Esophagus muscularis mucosa (tissue), 4 donors: ENCODE measurements at regions of chrX and their contacts with region 1.

Region 1: GRCh38 chrX:107672955-107673378 is 44.7 kb downstream of the PRPS1 start:
- DNase-seq: peak; percentile 94
- H3K4me3 ChIP-seq: peak overlapping the region in 1 of 4 donors; percentile 24
- H3K27ac ChIP-seq: peak overlapping the region; percentile 91 to 96 (median 92)
- H3K4me1 ChIP-seq: peaks cover 16 to 47% (median 40%) of the 10 kb centered on the region in 4 donors
- H3K27me3 ChIP-seq: no peaks in the 10 kb centered on the region
- CTCF ChIP-seq: peak; percentile 66 to 85 (median 74)
- EP300 ChIP-seq: peak; percentile 44
- POLR2A ChIP-seq: no peak

Region 2: GRCh38 chrX:107493142-107493541 is 179.8 kb before region 1 on chrX:
- intact Hi-C with region 1: no loop called
- DNase-seq: no peak
- H3K4me3 ChIP-seq: no peak overlapping the region
- H3K27ac ChIP-seq: no peak overlapping the region
- H3K4me1 ChIP-seq: no peaks in the 10 kb centered on the region
- H3K27me3 ChIP-seq: peaks cover 0 to 9% (median 0%) of the 10 kb centered on the region in 4 donors
- CTCF ChIP-seq: no peak
- EP300 ChIP-seq: no peak
- POLR2A ChIP-seq: no peak

Region 3: GRCh38 chrX:107522901-107523300 is 150.1 kb before region 1 on chrX:
- intact Hi-C with region 1: no loop called
- DNase-seq: no peak
- H3K4me3 ChIP-seq: no peak overlapping the region
- H3K27ac ChIP-seq: no peak overlapping the region
- H3K4me1 ChIP-seq: no peaks in the 10 kb centered on the region
- H3K27me3 ChIP-seq: peaks cover 0 to 10% (median 0%) of the 10 kb centered on the region in 4 donors
- CTCF ChIP-seq: no peak
- EP300 ChIP-seq: no peak
- POLR2A ChIP-seq: no peak

Region 4: GRCh38 chrX:107716816-107717700 is 44.1 kb after region 1 on chrX:
- intact Hi-C with region 1: loop called (anchors 2 kb)
- DNase-seq: peak; percentile 97
- H3K4me3 ChIP-seq: peak overlapping the region; percentile 71 to 87 (median 73)
- H3K27ac ChIP-seq: peak overlapping the region; percentile 94 to 97 (median 96)
- H3K4me1 ChIP-seq: peaks cover 8 to 60% (median 55%) of the 10 kb centered on the region in 4 donors
- H3K27me3 ChIP-seq: no peaks in the 10 kb centered on the region
- CTCF ChIP-seq: peak in 1 of 3 experiments; percentile 8
- EP300 ChIP-seq: peak; percentile 85
- POLR2A ChIP-seq: peak; percentile 95